CD8-positive, alpha-beta memory T cell (primary cell): ENCODE measurements at regions of chr1 and their contacts with region 1.

Region 1: DNA sequence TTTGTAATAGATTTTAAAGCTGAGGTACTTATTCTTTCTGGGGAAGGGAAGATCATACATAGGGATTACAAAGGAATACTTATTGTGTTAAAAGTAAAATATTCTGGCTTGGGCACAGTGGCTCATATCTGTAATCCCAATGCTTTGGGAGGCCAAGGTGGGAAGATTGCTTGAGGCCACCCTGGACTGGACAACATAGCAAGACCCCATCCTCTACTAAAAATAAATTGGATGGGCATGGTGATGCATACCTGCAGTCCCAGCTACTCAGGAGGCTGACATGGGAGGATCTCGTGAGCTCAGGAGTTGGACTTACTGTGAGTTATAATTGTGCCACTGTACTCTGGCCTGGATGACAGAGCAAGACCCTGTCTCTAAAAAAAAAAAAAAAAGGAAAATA is 27.6 kb downstream of the GABPB2 start:
- DNase-seq: no peak
- H3K4me3 ChIP-seq: no peak overlapping the region
- H3K4me3 Mint-ChIP-seq: no peak overlapping the region
- H3K27ac ChIP-seq: no peak overlapping the region
- H3K27ac Mint-ChIP-seq: peak overlapping the region in 2 of 8 donors; percentile 26 to 29
- H3K4me1 ChIP-seq: no peaks in the 10 kb centered on the region
- H3K4me1 Mint-ChIP-seq: no peaks in the 10 kb centered on the region
- H3K27me3 ChIP-seq: no peaks in the 10 kb centered on the region
- H3K27me3 Mint-ChIP-seq: no peaks in the 10 kb centered on the region

Region 2: DNA sequence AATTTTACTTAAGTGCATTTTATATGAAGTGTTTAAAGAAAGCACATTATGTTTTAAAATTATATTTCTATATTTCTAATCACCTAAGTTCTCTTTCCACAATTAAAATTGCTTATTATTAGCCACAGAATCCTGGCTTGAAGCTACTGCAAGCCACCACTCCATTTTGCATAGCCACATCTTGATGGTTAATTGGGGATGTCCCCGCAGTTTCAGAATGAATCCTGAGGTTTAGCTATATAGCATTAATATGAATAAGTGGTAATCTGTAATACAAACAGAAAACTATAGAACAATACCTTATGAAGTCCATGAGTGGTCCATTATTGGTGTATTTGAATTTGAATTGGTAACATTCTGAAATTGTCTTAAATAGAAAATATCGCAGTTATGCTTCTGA is 389.5 kb before region 1 on chr1:
- CTCF ChIA-PET with region 1: no interaction called
- POLR2A ChIA-PET with region 1: no interaction called
- DNase-seq: no peak
- H3K4me3 ChIP-seq: no peak overlapping the region
- H3K4me3 Mint-ChIP-seq: no peak overlapping the region
- H3K27ac ChIP-seq: no peak overlapping the region
- H3K27ac Mint-ChIP-seq: no peak overlapping the region
- H3K4me1 ChIP-seq: no peaks in the 10 kb centered on the region
- H3K4me1 Mint-ChIP-seq: no peaks in the 10 kb centered on the region
- H3K27me3 ChIP-seq: no peaks in the 10 kb centered on the region
- H3K27me3 Mint-ChIP-seq: no peaks in the 10 kb centered on the region

Region 3: DNA sequence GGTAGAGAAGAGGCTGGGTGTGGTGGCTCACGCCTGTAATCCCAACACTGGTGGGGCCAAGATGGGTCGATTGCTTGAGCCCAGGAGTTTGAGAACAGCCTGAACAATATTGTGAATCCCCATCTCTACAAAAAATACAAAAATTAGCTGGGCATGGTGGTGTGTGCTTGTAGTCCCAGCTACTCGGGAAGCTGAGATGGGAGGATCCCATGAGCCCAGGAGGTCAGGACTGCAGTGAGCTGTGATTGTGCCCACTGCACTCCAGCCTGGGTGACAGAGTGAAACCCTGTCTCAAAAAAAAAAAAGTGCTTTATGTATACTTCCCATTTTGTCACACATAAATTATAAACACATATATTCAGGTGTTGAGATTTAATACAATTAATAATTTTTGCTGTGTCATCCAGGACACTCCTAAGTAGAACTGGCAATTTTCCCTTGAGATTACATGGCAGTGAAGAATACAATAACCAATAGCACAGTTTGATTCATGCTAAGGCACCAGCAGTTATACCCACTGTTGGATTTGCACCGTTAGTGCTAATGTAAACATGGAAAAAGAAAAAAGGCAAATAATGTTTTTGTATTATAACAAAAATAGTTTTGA is 12.1 kb before region 1 on chr1:
- CTCF ChIA-PET with region 1: interaction called, 12 read pairs
- POLR2A ChIA-PET with region 1: interaction called, 3 read pairs
- DNase-seq: no peak
- H3K4me3 ChIP-seq: no peak overlapping the region
- H3K4me3 Mint-ChIP-seq: no peak overlapping the region
- H3K27ac ChIP-seq: no peak overlapping the region
- H3K27ac Mint-ChIP-seq: peak overlapping the region in 1 of 8 donors; percentile 32
- H3K4me1 ChIP-seq: no peaks in the 10 kb centered on the region
- H3K4me1 Mint-ChIP-seq: no peaks in the 10 kb centered on the region
- H3K27me3 ChIP-seq: no peaks in the 10 kb centered on the region
- H3K27me3 Mint-ChIP-seq: no peaks in the 10 kb centered on the region

Region 4: GRCh38 chr1:151251656-151252470 is 153.7 kb after region 1 on chr1:
- CTCF ChIA-PET with region 1: interaction called, 26 read pairs
- POLR2A ChIA-PET with region 1: interaction called, 3 read pairs
- DNase-seq: peak; percentile 29 to 72 (median 55)
- H3K4me3 ChIP-seq: no peak overlapping the region
- H3K4me3 Mint-ChIP-seq: peak overlapping the region in 2 of 7 donors; percentile 21 to 66
- H3K27ac ChIP-seq: no peak overlapping the region
- H3K27ac Mint-ChIP-seq: peak overlapping the region in 2 of 8 donors; percentile 70 to 79
- H3K4me1 ChIP-seq: peaks cover 11% of the 10 kb centered on the region
- H3K4me1 Mint-ChIP-seq: peaks cover 21 to 25% (median 22%) of the 10 kb centered on the region in 3 donors
- H3K27me3 ChIP-seq: no peaks in the 10 kb centered on the region
- H3K27me3 Mint-ChIP-seq: peaks cover 0 to 2% of the 10 kb centered on the region in 2 donors